IMR-90 (cell line): ENCODE measurements at regions of chr3 and their contacts with region 1.

Region 1: DNA sequence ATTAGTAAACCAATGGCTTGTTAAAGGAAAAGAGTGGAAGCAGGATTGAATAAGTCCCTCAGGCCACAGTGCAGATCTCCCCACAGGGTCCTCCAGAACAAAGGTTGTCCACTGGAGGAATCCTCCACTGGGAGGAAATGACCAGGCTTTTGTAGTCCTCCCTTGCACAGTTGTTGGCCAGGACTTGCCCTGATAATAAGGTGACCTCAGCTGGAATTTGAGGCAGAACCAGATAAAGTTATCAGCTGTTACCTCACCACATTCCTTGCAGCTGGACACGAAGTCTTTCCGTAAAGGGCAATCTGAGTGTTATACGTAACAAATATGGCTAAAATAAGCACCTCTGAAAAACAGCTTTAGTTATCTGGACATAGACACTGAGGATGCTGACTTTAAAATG is 83.5 kb upstream of the NAALADL2 start:
- DNase-seq: peak; percentile 35
- ATAC-seq: no peak; the same call in 1 of the 2 replicates
- H3K4me3 ChIP-seq: no peak overlapping the region
- H3K27ac ChIP-seq: no peak overlapping the region
- H3K4me1 ChIP-seq: no peaks in the 10 kb centered on the region
- H3K27me3 ChIP-seq: no peaks in the 10 kb centered on the region
- CTCF ChIP-seq: no peak
- POLR2A ChIP-seq: no peak
- RAD21 ChIP-seq: no peak

Region 2: GRCh38 chr3:174110761-174111160 is 664.8 kb before region 1 on chr3:
- CTCF ChIA-PET with region 1: no interaction called
- POLR2A ChIA-PET with region 1: no interaction called
- dilution Hi-C with region 1: no loop called
- in situ Hi-C with region 1: no loop called
- intact Hi-C with region 1: loop called (anchors 5 kb)
- DNase-seq: no peak
- ATAC-seq: no peak
- H3K4me3 ChIP-seq: no peak overlapping the region
- H3K27ac ChIP-seq: no peak overlapping the region
- H3K4me1 ChIP-seq: no peaks in the 10 kb centered on the region
- H3K27me3 ChIP-seq: no peaks in the 10 kb centered on the region
- CTCF ChIP-seq: no peak
- POLR2A ChIP-seq: no peak
- RAD21 ChIP-seq: no peak

Region 3: DNA sequence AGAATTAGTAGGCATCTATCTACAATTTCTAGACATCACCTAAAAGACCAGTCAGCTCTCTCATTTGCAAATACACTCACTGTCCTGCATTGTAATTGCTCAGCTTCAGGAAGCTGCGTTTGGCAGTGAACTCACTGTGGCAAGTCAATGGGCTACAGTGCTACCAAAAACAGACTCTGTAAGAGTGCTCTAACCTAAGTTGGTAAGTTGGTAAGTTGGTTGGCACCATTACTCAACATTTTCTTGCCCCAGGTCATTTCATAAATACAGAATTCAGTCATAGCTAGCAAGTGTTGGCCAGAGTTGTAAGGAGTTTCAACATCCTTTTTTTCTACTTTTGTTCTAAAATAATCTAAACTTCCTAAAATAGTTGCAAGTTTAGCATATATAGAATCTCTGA is 549.9 kb after region 1 on chr3:
- CTCF ChIA-PET with region 1: no interaction called
- POLR2A ChIA-PET with region 1: no interaction called
- dilution Hi-C with region 1: no loop called
- in situ Hi-C with region 1: no loop called
- intact Hi-C with region 1: no loop called
- DNase-seq: no peak
- ATAC-seq: no peak
- H3K4me3 ChIP-seq: no peak overlapping the region
- H3K27ac ChIP-seq: no peak overlapping the region
- H3K4me1 ChIP-seq: no peaks in the 10 kb centered on the region
- H3K27me3 ChIP-seq: no peaks in the 10 kb centered on the region
- CTCF ChIP-seq: no peak
- POLR2A ChIP-seq: no peak
- RAD21 ChIP-seq: no peak